H1 (cell line): ENCODE measurements at regions of chr7 and their contacts with region 1.

Region 1: DNA sequence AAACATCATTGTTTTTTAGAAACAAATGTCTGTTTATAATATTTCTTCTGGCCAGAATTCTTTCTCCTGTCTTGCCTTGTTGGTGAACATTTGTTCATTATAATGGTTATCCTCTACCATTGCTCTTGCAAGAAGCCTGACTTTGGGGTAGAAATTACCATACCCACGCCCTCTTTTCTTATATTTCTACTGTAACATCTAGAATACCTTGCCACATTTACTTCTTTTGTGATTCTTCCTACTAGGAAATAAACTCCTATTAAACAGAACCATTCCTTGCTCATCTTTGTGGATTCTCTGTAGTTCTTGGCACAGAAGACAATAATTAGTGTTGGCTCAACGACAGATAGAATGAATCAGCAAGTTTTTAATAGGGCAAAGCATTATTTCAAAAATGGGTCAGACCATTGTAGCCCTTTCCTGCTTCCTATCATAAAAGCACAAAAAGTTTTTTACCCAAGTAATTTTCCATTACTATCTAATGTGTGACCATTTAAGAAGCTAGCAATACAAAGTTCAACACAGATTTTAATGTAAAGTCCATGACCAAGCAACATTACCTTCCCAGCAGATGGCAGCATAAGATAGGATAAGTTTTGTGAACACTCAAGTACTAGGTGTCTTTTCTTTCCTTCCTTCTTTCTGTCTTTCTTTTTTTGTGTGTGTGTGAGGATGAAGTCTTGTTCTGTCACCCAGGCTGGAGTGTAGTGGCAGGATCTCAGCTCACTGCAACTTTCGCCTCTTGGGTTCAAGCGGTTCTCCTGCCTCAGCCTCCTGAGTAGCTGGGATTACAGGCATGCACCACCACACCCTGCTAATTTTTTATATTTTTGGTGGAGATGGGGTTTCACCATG is 270.4 kb downstream of the HGF start:
- DNase-seq: no peak
- H3K4me3 ChIP-seq: no peak overlapping the region
- H3K27ac ChIP-seq: no peak overlapping the region
- H3K4me1 ChIP-seq: no peaks in the 10 kb centered on the region
- H3K27me3 ChIP-seq: no peaks in the 10 kb centered on the region
- CTCF ChIP-seq: peak in 2 of 3 experiments; percentile 43 to 63; a peak in 2 of 4 replicates
- EP300 ChIP-seq: no peak
- POLR2A ChIP-seq: no peak
- RAD21 ChIP-seq: peak; percentile 91

Region 2: DNA sequence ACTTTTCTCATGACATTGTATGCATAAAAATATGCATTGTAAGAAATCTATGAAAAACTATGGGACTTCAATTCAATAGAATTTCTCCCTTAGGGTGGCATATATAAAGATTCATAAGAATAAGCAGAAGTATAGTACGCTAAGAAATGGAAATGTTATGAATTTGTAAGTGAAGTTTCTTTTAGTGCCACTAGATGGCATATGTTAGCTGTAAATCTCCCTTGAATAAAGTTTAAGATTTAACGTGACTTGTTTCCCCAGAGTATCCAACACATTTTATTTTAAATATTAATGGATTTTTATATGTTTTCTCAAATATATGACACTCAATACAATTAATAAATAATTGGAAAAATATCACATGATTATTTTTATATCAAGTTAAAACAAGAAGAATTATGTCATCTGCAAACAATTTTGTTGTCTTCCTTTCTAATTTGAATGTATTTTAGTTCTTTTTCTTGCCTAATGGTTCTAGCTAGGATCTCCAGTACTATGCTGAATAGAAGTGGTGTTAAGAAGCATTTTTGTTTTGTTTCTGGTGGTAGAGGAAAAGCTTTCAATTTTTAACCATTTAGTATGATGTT is 16.8 kb before region 1 on chr7:
- CTCF ChIA-PET with region 1: interaction called, 46 read pairs
- POLR2A ChIA-PET with region 1: interaction called, 3 read pairs
- DNase-seq: no peak
- H3K4me3 ChIP-seq: no peak overlapping the region
- H3K27ac ChIP-seq: no peak overlapping the region
- H3K4me1 ChIP-seq: 0 out of 7 replicates have a peak, but pooled peaks cover 0 to 4% (median 0%) of the 10 kb centered on the region in 4 experiments
- H3K27me3 ChIP-seq: no peaks in the 10 kb centered on the region
- CTCF ChIP-seq: peak in 1 of 3 experiments; percentile 26; a peak in 1 of 4 replicates
- EP300 ChIP-seq: no peak
- POLR2A ChIP-seq: no peak
- RAD21 ChIP-seq: peak in 1 of 2 experiments; percentile 63

Region 3: GRCh38 chr7:81715984-81716588 is 216.6 kb after region 1 on chr7:
- CTCF ChIA-PET with region 1: interaction called, 27 read pairs
- POLR2A ChIA-PET with region 1: no interaction called
- DNase-seq: no peak
- H3K4me3 ChIP-seq: no peak overlapping the region
- H3K27ac ChIP-seq: no peak overlapping the region
- H3K4me1 ChIP-seq: no peaks in the 10 kb centered on the region
- H3K27me3 ChIP-seq: no peaks in the 10 kb centered on the region
- CTCF ChIP-seq: peak in 2 of 3 experiments; percentile 36 to 57; a peak in 3 of 4 replicates
- EP300 ChIP-seq: no peak
- POLR2A ChIP-seq: no peak
- RAD21 ChIP-seq: peak; percentile 74 to 78

Region 4: GRCh38 chr7:81776948-81777630 is 277.6 kb after region 1 on chr7:
- CTCF ChIA-PET with region 1: interaction called, 17 read pairs
- POLR2A ChIA-PET with region 1: no interaction called
- DNase-seq: no peak
- H3K4me3 ChIP-seq: no peak overlapping the region
- H3K27ac ChIP-seq: no peak overlapping the region
- H3K4me1 ChIP-seq: no peaks in the 10 kb centered on the region
- H3K27me3 ChIP-seq: no peaks in the 10 kb centered on the region
- CTCF ChIP-seq: peak; percentile 5 to 50 (median 49)
- EP300 ChIP-seq: no peak
- POLR2A ChIP-seq: no peak
- RAD21 ChIP-seq: peak; percentile 36 to 66

Region 5: GRCh38 chr7:81956520-81956919 is 457.0 kb after region 1 on chr7:
- CTCF ChIA-PET with region 1: interaction called, 20 read pairs
- POLR2A ChIA-PET with region 1: no interaction called
- DNase-seq: no peak
- H3K4me3 ChIP-seq: no peak overlapping the region
- H3K27ac ChIP-seq: no peak overlapping the region
- H3K4me1 ChIP-seq: no peaks in the 10 kb centered on the region
- H3K27me3 ChIP-seq: no peaks in the 10 kb centered on the region
- CTCF ChIP-seq: peak in 2 of 3 experiments; percentile 68 to 71; a peak in 3 of 4 replicates
- EP300 ChIP-seq: no peak
- POLR2A ChIP-seq: no peak
- RAD21 ChIP-seq: peak; percentile 92 to 94

Region 6: DNA sequence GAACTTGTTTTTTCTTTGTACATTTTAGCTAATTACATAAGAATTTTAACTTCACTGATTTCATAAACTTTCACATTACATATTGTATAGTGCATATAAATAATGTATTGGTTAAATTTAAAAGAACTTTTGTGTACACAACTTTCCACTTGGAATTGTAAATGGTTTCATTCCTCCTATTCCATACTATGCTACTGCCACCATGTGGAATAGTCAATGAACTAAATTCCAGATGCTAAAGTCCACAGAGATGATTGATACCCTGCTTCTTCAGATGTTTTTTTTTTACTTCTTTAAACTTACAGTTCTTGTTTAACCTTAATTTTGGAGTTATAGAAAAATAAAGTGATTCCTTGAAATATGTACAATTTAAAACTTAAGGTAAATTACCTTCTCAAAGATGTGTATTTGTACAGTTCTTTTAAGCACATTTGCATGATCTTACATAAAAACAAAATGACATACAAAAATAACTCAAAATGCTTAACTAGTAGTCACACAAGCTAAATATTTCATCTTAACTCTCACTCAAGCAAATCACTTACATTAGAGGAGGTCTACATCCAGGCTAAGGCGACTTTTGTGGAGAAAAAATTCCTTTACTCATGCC is 518.0 kb after region 1 on chr7:
- CTCF ChIA-PET with region 1: interaction called, 42 read pairs
- POLR2A ChIA-PET with region 1: no interaction called
- DNase-seq: no peak
- H3K4me3 ChIP-seq: no peak overlapping the region
- H3K27ac ChIP-seq: no peak overlapping the region
- H3K4me1 ChIP-seq: no peaks in the 10 kb centered on the region
- H3K27me3 ChIP-seq: no peaks in the 10 kb centered on the region
- CTCF ChIP-seq: peak in 1 of 3 experiments; percentile 43; a peak in 2 of 4 replicates
- EP300 ChIP-seq: no peak
- POLR2A ChIP-seq: no peak
- RAD21 ChIP-seq: peak; percentile 59 to 63